Activated B cell treated with CpG ODN at 0.5 μM for 24 hours (primary cell): ENCODE measurements at regions of chr18 and their contacts with region 1.

Region 1: DNA sequence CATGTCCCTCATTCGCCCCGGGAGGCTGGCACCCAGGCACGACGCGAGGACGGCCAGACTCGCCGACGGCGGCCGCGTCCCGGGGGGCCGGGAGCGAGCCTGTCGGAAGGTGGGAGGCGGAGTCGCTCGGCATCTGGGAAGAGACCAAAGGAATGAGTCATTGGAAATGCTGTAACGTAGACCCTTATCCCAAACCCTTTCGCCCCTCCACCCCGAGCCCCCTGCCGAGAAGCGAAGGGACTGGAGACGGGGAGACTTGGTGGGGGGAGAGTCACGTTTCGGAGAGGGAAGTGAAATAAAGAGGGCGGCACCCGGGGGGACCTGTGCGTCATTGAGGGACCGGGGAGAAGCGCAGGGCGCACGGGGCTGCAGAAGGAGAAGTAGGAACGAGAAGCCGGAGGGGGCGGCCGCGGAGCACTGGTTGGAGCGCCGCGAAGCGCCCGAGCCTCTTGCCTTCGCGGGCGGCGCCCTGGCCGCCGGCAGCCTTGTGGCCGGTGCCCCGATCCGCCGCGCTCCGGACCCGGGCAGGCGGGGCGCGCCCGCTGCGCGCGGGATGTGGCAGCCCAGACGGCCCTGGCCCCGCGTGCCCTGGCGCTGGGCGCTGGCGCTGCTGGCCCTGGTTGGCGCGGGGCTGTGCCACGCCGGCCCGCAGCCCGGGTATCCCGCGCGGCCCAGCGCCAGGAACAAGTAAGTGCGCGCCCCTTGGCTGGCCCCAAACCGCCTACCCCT is at the start of gene EMILIN2:
- DNase-seq: peak; percentile 87
- ATAC-seq: peak; percentile 81
- H3K4me3 Mint-ChIP-seq: peak within 1 kb of the TSS; percentile 96
- H3K27ac Mint-ChIP-seq: peak within 1 kb of the TSS; percentile 94
- H3K4me1 Mint-ChIP-seq: peaks cover 52% of the 10 kb centered on the region
- H3K27me3 Mint-ChIP-seq: peaks cover 8% of the 10 kb centered on the region
- CTCF ChIP-seq: no peak
- total RNA-seq, gene EMILIN2: 73.0 and 80.9 TPM in 2 replicates

Region 2: GRCh38 chr18:2571200-2572143 is 275.3 kb before region 1 on chr18 and contains the starts of genes METTL4 and NDC80:
- CTCF ChIA-PET with region 1: no interaction called
- POLR2A ChIA-PET with region 1: no interaction called
- intact Hi-C with region 1: loop called (anchors 1 kb)
- DNase-seq: peak; percentile 82
- ATAC-seq: peak; percentile 93
- H3K4me3 Mint-ChIP-seq: peak within 1 kb of the TSS; percentile 100
- H3K27ac Mint-ChIP-seq: peak within 1 kb of the TSS; percentile 99
- H3K4me1 Mint-ChIP-seq: peaks cover 50% of the 10 kb centered on the region
- H3K27me3 Mint-ChIP-seq: no peaks in the 10 kb centered on the region
- CTCF ChIP-seq: no peak
- total RNA-seq, gene METTL4: 17.4 TPM in 2 replicates
- total RNA-seq, gene NDC80: 1.9 and 2.6 TPM in 2 replicates

Region 3: GRCh38 chr18:2655178-2655953 is 191.4 kb before region 1 on chr18 and contains the start of gene SMCHD1:
- CTCF ChIA-PET with region 1: no interaction called
- POLR2A ChIA-PET with region 1: interaction called, 24 read pairs
- intact Hi-C with region 1: loop called (anchors 1 kb)
- DNase-seq: peak; percentile 90
- ATAC-seq: peak; percentile 74
- H3K4me3 Mint-ChIP-seq: peak within 1 kb of the TSS; percentile 96
- H3K27ac Mint-ChIP-seq: peak within 1 kb of the TSS; percentile 98
- H3K4me1 Mint-ChIP-seq: peaks cover 44% of the 10 kb centered on the region
- H3K27me3 Mint-ChIP-seq: no peaks in the 10 kb centered on the region
- CTCF ChIP-seq: no peak
- total RNA-seq, gene SMCHD1: 111 and 144 TPM in 2 replicates

Region 4: GRCh38 chr18:2805970-2806943 is 40.5 kb before region 1 on chr18:
- CTCF ChIA-PET with region 1: no interaction called
- POLR2A ChIA-PET with region 1: interaction called, 13 read pairs
- intact Hi-C with region 1: no loop called
- DNase-seq: no peak
- ATAC-seq: no peak
- H3K4me3 Mint-ChIP-seq: no peak overlapping the region
- H3K27ac Mint-ChIP-seq: peak overlapping the region; percentile 5
- H3K4me1 Mint-ChIP-seq: no peaks in the 10 kb centered on the region
- H3K27me3 Mint-ChIP-seq: no peaks in the 10 kb centered on the region
- CTCF ChIP-seq: no peak

Region 5: DNA sequence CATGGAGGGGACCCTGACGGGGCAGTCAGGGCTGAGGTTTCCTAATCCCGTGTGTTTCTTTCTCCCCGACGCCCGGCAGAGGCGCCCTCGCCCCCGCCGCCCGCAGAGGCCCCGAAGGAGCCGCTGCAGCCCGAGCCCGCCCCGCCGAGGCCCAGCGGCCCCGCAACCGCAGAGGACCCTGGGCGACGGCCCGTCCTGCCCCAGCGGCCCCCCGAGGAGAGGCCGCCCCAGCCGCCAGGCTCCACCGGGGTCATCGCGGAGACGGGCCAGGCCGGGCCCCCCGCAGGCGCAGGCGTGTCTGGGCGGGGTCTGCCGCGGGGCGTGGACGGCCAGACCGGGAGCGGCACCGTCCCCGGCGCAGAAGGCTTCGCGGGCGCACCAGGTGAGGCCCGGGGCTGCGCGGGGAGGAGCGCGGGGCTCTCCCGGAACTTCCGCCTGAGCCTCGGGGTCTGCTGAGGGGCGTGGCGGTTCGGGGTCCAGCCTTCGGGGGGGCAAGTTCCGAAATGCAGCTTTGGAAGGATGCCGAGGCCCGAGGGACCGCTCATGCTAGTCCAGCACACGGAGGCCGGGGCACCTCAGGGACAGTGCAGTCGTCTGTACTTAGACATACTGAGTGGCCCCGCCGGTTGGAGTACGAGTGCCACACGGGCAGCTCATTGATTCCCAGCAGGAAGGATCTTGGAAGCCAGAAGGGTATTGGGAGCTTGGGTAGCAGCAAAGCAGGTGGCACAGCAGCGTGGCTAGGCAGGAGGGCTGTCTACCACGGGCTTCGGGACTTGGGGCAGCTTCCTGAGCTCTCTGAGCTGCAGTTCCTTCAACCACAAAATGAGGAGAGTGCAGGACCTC is 60.1 kb after region 1 on chr18:
- CTCF ChIA-PET with region 1: no interaction called
- POLR2A ChIA-PET with region 1: no interaction called
- intact Hi-C with region 1: loop called (anchors 5 kb)
- DNase-seq: peak; percentile 48
- ATAC-seq: peak; percentile 70
- H3K4me3 Mint-ChIP-seq: peak overlapping the region; percentile 71
- H3K27ac Mint-ChIP-seq: peak overlapping the region; percentile 8
- H3K4me1 Mint-ChIP-seq: peaks cover 17% of the 10 kb centered on the region
- H3K27me3 Mint-ChIP-seq: no peaks in the 10 kb centered on the region
- CTCF ChIP-seq: no peak

Region 6: DNA sequence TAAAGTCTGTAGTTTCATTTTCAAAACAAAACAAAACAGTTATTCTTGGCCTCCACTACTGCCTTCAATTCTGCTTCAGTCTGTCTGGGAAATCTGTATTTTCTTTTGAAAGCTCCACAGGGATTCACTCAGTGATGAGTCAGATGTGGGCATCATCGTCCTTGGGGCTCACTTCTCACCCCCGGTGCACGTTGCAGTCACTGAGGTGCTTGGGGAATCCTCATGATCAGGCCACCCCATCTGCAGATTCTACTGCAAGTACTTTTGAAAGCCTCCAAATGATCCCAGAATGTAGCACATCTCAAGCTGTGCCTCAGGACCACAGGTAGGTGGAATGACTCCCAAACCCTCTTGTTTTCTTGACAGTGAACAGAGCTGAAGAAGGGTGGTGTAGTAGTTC is 131.8 kb after region 1 on chr18:
- CTCF ChIA-PET with region 1: no interaction called
- POLR2A ChIA-PET with region 1: interaction called, 5 read pairs
- intact Hi-C with region 1: loop called (anchors 5 kb)
- DNase-seq: no peak
- ATAC-seq: peak; percentile 26
- H3K4me3 Mint-ChIP-seq: peak overlapping the region; percentile 52
- H3K27ac Mint-ChIP-seq: peak overlapping the region; percentile 94
- H3K4me1 Mint-ChIP-seq: peaks cover 77% of the 10 kb centered on the region
- H3K27me3 Mint-ChIP-seq: no peaks in the 10 kb centered on the region
- CTCF ChIP-seq: no peak

Region 7: GRCh38 chr18:3177902-3178687 is 331.3 kb after region 1 on chr18:
- CTCF ChIA-PET with region 1: interaction called, 3 read pairs
- POLR2A ChIA-PET with region 1: interaction called, 5 read pairs
- intact Hi-C with region 1: loop called (anchors 2 kb)
- DNase-seq: peak; percentile 66
- ATAC-seq: peak; percentile 86
- H3K4me3 Mint-ChIP-seq: peak overlapping the region; percentile 76
- H3K27ac Mint-ChIP-seq: peak overlapping the region; percentile 99
- H3K4me1 Mint-ChIP-seq: peaks cover 32% of the 10 kb centered on the region
- H3K27me3 Mint-ChIP-seq: no peaks in the 10 kb centered on the region
- CTCF ChIP-seq: no peak